ENCODE measurements at regions of chr11 and their contacts with region 1.

Region 1: DNA sequence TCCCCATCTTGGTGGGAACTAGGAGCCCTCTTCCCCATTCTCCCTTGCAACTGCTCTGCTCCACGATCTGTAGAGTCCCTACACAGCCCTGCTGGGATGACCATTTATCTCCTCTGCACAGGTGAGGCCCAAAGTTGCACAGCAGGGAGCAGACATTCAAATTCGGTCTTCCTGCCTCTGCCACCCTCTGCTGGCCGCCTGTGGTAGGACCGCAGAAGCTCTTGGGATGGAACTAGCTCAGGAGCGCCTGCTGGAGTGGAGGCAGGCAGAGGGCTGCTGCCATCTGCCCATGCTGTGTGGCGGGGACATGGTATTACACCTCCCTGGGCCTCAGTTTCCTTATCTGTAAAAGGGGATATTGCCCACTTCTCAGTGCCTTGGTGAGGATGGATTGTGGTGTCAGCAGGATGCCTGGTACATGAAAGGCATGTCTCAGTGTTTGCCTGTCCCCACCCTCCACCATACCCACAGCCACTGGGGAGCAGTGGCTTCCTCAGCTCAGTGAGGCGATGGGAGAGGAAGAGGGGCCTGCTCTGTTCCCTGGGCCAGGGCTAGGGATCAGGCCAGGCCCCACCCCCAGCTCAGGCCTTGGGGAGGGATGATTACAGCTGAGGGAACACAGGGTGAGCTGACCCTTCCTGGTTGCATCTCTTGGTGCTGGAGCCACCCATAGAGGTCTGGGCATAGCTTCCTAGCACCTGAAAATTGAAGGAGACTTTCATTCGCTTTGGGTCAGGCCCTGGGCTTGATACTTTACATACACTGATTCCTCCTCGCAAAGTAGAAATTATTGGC is 11.3 kb upstream of the OMP start:
- DNase-seq: peak; percentile 90 to 95
- H3K4me3 ChIP-seq: no peak overlapping the region
- H3K4me3 Mint-ChIP-seq: no peak overlapping the region
- H3K27ac Mint-ChIP-seq: peak overlapping the region; percentile 39
- H3K4me1 ChIP-seq: peaks cover 24% of the 10 kb centered on the region
- H3K4me1 Mint-ChIP-seq: peaks cover 21% of the 10 kb centered on the region
- H3K27me3 ChIP-seq: no peaks in the 10 kb centered on the region
- H3K27me3 Mint-ChIP-seq: no peaks in the 10 kb centered on the region
- CTCF ChIP-seq: peak; percentile 99 to 100

Region 2: GRCh38 chr11:76734456-76735420 is 356.6 kb before region 1 on chr11:
- CTCF ChIA-PET with region 1: interaction called, 15 read pairs
- POLR2A ChIA-PET with region 1: interaction called, 3 read pairs
- intact Hi-C with region 1: loop called (anchors 5 kb)
- DNase-seq: no peak
- H3K4me3 ChIP-seq: no peak overlapping the region
- H3K4me3 Mint-ChIP-seq: no peak overlapping the region
- H3K27ac Mint-ChIP-seq: no peak overlapping the region
- H3K4me1 ChIP-seq: peaks cover 11% of the 10 kb centered on the region
- H3K4me1 Mint-ChIP-seq: peaks cover 9% of the 10 kb centered on the region
- H3K27me3 ChIP-seq: no peaks in the 10 kb centered on the region; the same call in 1 of the 2 replicates
- H3K27me3 Mint-ChIP-seq: no peaks in the 10 kb centered on the region
- CTCF ChIP-seq: no peak

Region 3: DNA sequence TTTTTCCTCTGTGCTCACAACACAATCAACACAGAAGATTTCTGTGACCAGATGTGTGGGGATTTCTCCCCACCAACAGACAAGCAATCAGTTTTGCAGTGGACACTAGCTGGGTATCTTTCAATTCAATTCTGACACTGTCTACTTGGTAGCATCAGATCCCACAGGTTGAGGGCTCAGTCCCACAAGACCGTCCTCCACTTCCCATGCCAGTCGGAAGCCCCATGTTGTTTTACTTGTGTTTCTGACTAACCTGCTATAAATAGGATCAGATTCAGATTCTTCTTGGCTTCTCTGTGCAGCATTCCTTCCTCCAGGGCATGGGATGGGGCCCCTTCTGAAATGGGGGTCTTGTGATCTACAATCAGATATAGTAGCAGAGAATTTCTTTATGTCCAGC is 211.0 kb before region 1 on chr11:
- CTCF ChIA-PET with region 1: no interaction called
- POLR2A ChIA-PET with region 1: no interaction called
- intact Hi-C with region 1: no loop called
- DNase-seq: no peak
- H3K4me3 ChIP-seq: no peak overlapping the region
- H3K4me3 Mint-ChIP-seq: no peak overlapping the region
- H3K27ac Mint-ChIP-seq: no peak overlapping the region
- H3K4me1 ChIP-seq: no peaks in the 10 kb centered on the region
- H3K4me1 Mint-ChIP-seq: no peaks in the 10 kb centered on the region
- H3K27me3 ChIP-seq: no peaks in the 10 kb centered on the region
- H3K27me3 Mint-ChIP-seq: no peaks in the 10 kb centered on the region
- CTCF ChIP-seq: no peak

Region 4: GRCh38 chr11:76962583-76963416 is 128.5 kb before region 1 on chr11:
- CTCF ChIA-PET with region 1: interaction called, 5 read pairs
- POLR2A ChIA-PET with region 1: interaction called, 3 read pairs
- intact Hi-C with region 1: loop called (anchors 1 kb)
- DNase-seq: peak; percentile 89 to 92
- H3K4me3 ChIP-seq: no peak overlapping the region
- H3K4me3 Mint-ChIP-seq: peak overlapping the region; percentile 53
- H3K27ac Mint-ChIP-seq: peak overlapping the region; percentile 92
- H3K4me1 ChIP-seq: peaks cover 22% of the 10 kb centered on the region
- H3K4me1 Mint-ChIP-seq: peaks cover 30% of the 10 kb centered on the region
- H3K27me3 ChIP-seq: no peaks in the 10 kb centered on the region
- H3K27me3 Mint-ChIP-seq: no peaks in the 10 kb centered on the region
- CTCF ChIP-seq: no peak

Region 5: DNA sequence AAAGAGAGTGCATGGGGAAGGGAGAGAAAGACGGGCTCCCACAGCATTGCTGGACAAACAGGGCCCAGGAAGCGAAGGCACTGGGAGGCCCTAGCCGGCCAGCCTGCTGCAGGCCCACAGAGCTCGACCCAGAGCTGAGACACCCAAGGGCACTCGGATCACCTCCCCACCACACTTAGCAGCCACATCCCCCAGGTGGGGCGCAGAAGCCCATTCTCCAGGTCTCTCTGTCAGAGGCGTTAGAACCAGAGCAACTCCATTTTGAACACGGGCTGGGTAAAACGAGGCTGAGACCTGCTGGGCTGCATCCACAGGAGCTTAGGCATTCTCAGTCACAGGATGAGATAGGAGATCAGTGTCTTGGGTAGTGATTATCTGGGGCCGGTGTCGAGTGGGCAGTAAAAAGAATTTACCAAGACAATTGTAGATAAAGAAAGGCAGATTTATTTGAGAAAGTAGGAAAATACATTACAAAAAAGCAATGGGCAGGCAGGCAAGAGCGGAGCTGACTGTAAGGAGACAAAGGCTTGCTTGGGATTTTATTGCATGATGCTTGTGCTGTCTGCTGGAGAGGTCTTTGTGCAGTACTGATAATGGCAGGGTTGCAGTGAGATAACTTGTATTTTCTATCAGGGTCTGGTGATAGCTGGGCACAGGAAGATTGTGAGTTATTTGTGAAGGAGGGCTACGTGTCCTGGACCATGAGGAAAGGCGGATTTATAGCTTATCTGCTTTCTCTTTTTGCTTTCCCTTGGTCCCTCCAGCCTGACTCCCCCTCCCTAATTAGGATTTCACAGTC is 37.9 kb before region 1 on chr11:
- CTCF ChIA-PET with region 1: interaction called, 380 read pairs
- POLR2A ChIA-PET with region 1: interaction called, 4 read pairs
- intact Hi-C with region 1: no loop called
- DNase-seq: peak in 1 of 2 experiments; percentile 25
- H3K4me3 ChIP-seq: no peak overlapping the region
- H3K4me3 Mint-ChIP-seq: no peak overlapping the region
- H3K27ac Mint-ChIP-seq: no peak overlapping the region
- H3K4me1 ChIP-seq: no peaks in the 10 kb centered on the region
- H3K4me1 Mint-ChIP-seq: no peaks in the 10 kb centered on the region
- H3K27me3 ChIP-seq: no peaks in the 10 kb centered on the region
- H3K27me3 Mint-ChIP-seq: no peaks in the 10 kb centered on the region
- CTCF ChIP-seq: no peak

Region 6: GRCh38 chr11:77073328-77074001 is 17.9 kb before region 1 on chr11:
- CTCF ChIA-PET with region 1: interaction called, 19 read pairs
- POLR2A ChIA-PET with region 1: no interaction called
- intact Hi-C with region 1: loop called (anchors 1 kb)
- DNase-seq: peak; percentile 37 to 57
- H3K4me3 ChIP-seq: no peak overlapping the region
- H3K4me3 Mint-ChIP-seq: no peak overlapping the region
- H3K27ac Mint-ChIP-seq: no peak overlapping the region
- H3K4me1 ChIP-seq: peaks cover 10% of the 10 kb centered on the region
- H3K4me1 Mint-ChIP-seq: peaks cover 21% of the 10 kb centered on the region
- H3K27me3 ChIP-seq: no peaks in the 10 kb centered on the region
- H3K27me3 Mint-ChIP-seq: no peaks in the 10 kb centered on the region
- CTCF ChIP-seq: peak in 1 of 2 experiments; percentile 5

Region 7: GRCh38 chr11:77113382-77114088 is 22.2 kb after region 1 on chr11:
- CTCF ChIA-PET with region 1: interaction called, 11 read pairs
- POLR2A ChIA-PET with region 1: no interaction called
- intact Hi-C with region 1: no loop called
- DNase-seq: peak in 1 of 2 experiments; percentile 76
- H3K4me3 ChIP-seq: no peak overlapping the region
- H3K4me3 Mint-ChIP-seq: no peak overlapping the region
- H3K27ac Mint-ChIP-seq: no peak overlapping the region
- H3K4me1 ChIP-seq: no peaks in the 10 kb centered on the region
- H3K4me1 Mint-ChIP-seq: peaks cover under 1% of the 10 kb centered on the region
- H3K27me3 ChIP-seq: no peaks in the 10 kb centered on the region
- H3K27me3 Mint-ChIP-seq: no peaks in the 10 kb centered on the region
- CTCF ChIP-seq: peak; percentile 96 to 98

Measured in Caco-2 (cell line).